ENCODE measurements at regions of chr2 and their contacts with region 1.

Region 1: DNA sequence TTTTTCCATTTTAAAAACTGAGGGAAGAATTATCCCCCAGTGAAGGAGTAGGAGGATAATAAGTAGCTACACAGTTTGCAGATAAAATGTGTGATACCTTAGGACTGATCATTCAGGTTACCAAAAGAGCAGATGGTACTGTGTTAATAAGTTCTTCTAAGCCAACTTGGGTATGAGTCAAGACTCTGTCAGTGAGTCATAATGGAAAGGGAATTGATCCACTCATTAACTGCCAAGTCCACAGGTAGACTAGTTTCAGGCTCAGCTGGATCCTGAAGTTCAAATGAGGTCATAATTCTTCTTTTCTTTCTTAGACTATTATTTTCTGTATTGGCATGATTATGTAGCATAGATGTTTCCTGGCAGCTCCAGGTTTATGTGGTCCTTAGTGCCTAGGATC is 142.4 kb upstream of the ALPP start:
- DNase-seq: no peak
- H3K4me3 Mint-ChIP-seq: no peak overlapping the region
- H3K27ac Mint-ChIP-seq: no peak overlapping the region
- H3K4me1 Mint-ChIP-seq: peaks cover 74% of the 10 kb centered on the region
- H3K27me3 Mint-ChIP-seq: no peaks in the 10 kb centered on the region

Region 2: DNA sequence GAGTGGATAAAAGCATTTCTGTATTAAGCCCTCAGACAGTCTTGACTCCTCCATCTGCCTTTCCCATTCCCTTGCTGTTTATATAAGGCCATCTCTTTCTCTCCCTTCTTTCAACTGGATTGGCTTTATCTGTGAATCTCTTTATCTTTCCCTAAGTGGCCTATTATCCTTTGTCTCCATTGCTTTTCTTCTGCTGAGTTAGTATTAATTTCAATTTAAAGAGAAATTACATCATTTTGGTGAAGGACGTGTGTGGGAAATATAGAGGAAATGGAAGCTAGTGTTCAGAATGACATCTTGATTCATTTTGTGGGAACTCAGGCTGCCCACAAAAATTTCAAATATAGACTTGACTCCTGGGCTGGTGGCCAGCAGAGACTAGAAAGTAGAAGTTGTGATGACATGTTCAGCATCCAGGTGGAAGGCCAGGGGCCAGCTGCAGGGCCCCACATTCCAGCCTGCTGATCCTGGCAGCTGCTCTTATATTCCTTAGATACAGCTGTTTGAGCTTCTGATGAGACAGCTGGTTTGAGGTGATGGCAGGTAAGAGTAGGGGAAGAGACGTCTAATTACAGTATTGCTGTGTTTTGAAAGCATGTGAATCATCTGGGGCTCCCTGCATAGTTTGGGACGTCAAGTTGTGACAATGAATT is 222.4 kb before region 1 on chr2:
- CTCF ChIA-PET with region 1: no interaction called
- intact Hi-C with region 1: no loop called
- DNase-seq: no peak
- H3K4me3 Mint-ChIP-seq: no peak overlapping the region
- H3K27ac Mint-ChIP-seq: no peak overlapping the region
- H3K4me1 Mint-ChIP-seq: peaks cover 18% of the 10 kb centered on the region
- H3K27me3 Mint-ChIP-seq: no peaks in the 10 kb centered on the region

Region 3: DNA sequence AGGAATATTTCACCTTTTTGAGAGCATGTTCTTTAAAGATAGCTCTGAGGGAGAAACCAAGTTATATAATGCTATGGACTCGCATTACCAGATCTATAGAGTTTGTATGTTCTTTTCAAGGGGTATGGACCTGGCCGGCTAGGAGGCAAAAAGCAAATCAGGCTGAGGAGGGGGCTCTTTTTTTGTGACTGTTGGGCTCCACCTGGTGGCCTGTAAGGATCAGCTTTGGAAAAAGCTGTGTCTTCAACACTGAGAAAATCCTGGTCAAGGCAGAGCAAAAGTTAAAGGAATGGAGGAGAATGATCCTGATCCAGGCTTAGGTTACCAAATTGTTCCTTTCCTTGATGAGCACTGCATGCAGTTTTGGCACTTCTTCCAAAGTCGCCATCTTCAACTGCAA is 94.2 kb before region 1 on chr2:
- CTCF ChIA-PET with region 1: interaction called, 3 read pairs
- intact Hi-C with region 1: loop called (anchors 5 kb)
- DNase-seq: peak; percentile 65
- H3K4me3 Mint-ChIP-seq: no peak overlapping the region
- H3K27ac Mint-ChIP-seq: no peak overlapping the region
- H3K4me1 Mint-ChIP-seq: peaks cover 37% of the 10 kb centered on the region
- H3K27me3 Mint-ChIP-seq: no peaks in the 10 kb centered on the region

Region 4: GRCh38 chr2:232315049-232315922 is 79.1 kb after region 1 on chr2:
- CTCF ChIA-PET with region 1: no interaction called
- intact Hi-C with region 1: loop called (anchors 1 kb)
- DNase-seq: peak; percentile 90
- H3K4me3 Mint-ChIP-seq: peak overlapping the region; percentile 61
- H3K27ac Mint-ChIP-seq: peak overlapping the region; percentile 92
- H3K4me1 Mint-ChIP-seq: peaks cover 70% of the 10 kb centered on the region
- H3K27me3 Mint-ChIP-seq: no peaks in the 10 kb centered on the region

Region 5: DNA sequence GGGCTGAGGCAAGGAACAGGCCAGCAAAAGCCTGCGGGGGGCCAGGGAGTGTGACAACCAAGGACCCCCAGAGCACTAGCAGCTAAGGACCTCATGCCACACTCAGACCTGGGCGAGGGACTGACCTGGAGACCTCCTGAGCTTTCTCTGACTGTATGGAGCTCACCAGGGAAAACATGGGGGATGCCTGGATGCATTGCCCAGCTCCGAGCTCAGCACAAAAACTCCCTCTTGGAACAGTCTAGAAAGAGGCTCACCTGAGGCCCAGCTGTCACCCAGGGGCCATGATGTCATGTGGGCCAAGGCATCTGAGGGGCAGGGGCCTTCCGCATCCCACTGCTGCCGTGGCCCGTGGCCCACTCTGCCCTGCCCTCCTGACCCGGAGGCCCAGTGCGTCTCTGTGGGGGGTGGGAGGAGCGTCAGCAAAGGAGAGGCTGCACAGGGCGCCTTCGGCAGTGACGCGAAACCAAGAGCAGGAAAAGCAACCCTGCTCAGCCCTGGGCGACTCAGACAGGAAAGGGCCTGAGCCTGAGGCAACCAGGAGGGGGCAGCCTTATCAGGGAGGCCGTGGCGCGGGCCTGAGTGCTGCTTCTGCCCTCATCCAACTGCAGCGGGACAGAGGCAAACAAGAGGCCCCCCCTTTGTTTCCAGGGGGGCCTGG is 85.1 kb after region 1 on chr2:
- CTCF ChIA-PET with region 1: interaction called, 10 read pairs
- intact Hi-C with region 1: loop called (anchors 1 kb)
- DNase-seq: peak; percentile 83
- H3K4me3 Mint-ChIP-seq: peak overlapping the region; percentile 29
- H3K27ac Mint-ChIP-seq: peak overlapping the region; percentile 79
- H3K4me1 Mint-ChIP-seq: peaks cover 63% of the 10 kb centered on the region
- H3K27me3 Mint-ChIP-seq: no peaks in the 10 kb centered on the region

Measured in activated naive CD4-positive, alpha-beta T cell treated with anti-CD3 and anti-CD28 coated beads for 36 hours (primary cell).